GM23248 (cell line): ENCODE measurements at regions of chr1 and their contacts with region 1.

Region 1: GRCh38 chr1:33349778-33350610 is 29.1 kb upstream of the A3GALT2 start:
- DNase-seq: peak; percentile 93
- H3K4me3 ChIP-seq: peak overlapping the region; percentile 84
- H3K27ac ChIP-seq: peak overlapping the region; percentile 22; the same call in 1 of the 2 replicates
- H3K4me1 ChIP-seq: peaks cover 30% of the 10 kb centered on the region
- H3K27me3 ChIP-seq: no peaks in the 10 kb centered on the region

Region 2: GRCh38 chr1:33219881-33220661 is 129.9 kb before region 1 on chr1:
- in situ Hi-C with region 1: loop called (anchors 25 kb)
- DNase-seq: peak; percentile 58
- H3K4me3 ChIP-seq: no peak overlapping the region
- H3K27ac ChIP-seq: no peak overlapping the region
- H3K4me1 ChIP-seq: 0 out of 2 replicates have a peak, but pooled peaks cover 7% of the 10 kb centered on the region
- H3K27me3 ChIP-seq: no peaks in the 10 kb centered on the region